HepG2 (cell line): ENCODE measurements at regions of chr9 and their contacts with region 1.

Region 1: GRCh38 chr9:133149126-133150107 is 14.3 kb downstream of the GBGT1 start:
- DNase-seq: peak; percentile 82
- ATAC-seq: peak; percentile 61
- H3K4me3 ChIP-seq: peak overlapping the region; percentile 21 to 88 (median 88); a peak in 5 of 6 replicates
- H3K27ac ChIP-seq: peak overlapping the region; percentile 55
- H3K4me1 ChIP-seq: peaks cover 62% of the 10 kb centered on the region
- H3K27me3 ChIP-seq: peaks cover 0 to 4% of the 10 kb centered on the region in 2 experiments; a peak in 1 of 5 replicates
- CTCF ChIP-seq: peak; percentile 69
- EP300 ChIP-seq: no peak
- POLR2A ChIP-seq: peak in 1 of 2 experiments; percentile 45; a peak in 2 of 4 replicates
- RAD21 ChIP-seq: peak; percentile 55; the same call in 1 of the 2 replicates

Region 2: GRCh38 chr9:133030317-133031129 is 118.9 kb before region 1 on chr9 and contains the start of gene GTF3C5:
- CTCF ChIA-PET with region 1: no interaction called
- POLR2A ChIA-PET with region 1: interaction called, 10 read pairs
- in situ Hi-C with region 1: no loop called
- intact Hi-C with region 1: loop called (anchors 5 kb)
- DNase-seq: peak; percentile 99
- ATAC-seq: peak; percentile 98
- H3K4me3 ChIP-seq: peak within 1 kb of the TSS; percentile 95 to 99 (median 99)
- H3K27ac ChIP-seq: peak within 1 kb of the TSS; percentile 85
- H3K4me1 ChIP-seq: peaks cover 42% of the 10 kb centered on the region
- H3K27me3 ChIP-seq: no peaks in the 10 kb centered on the region; a peak in 1 of 5 replicates
- CTCF ChIP-seq: no peak
- EP300 ChIP-seq: 0 out of 4 replicates have a peak, but pooled peaks of 1 of the 2 experiments have one; percentile 22
- POLR2A ChIP-seq: peak; percentile 68 to 87
- RAD21 ChIP-seq: peak; percentile 54
- total RNA-seq, gene GTF3C5: 43.4 and 66.9 TPM in 2 replicates

Region 3: GRCh38 chr9:133048569-133048968 is 100.8 kb before region 1 on chr9:
- CTCF ChIA-PET with region 1: no interaction called
- POLR2A ChIA-PET with region 1: no interaction called
- in situ Hi-C with region 1: loop called (anchors 10 kb)
- intact Hi-C with region 1: loop called (anchors 5 kb)
- DNase-seq: no peak
- ATAC-seq: peak; percentile 67
- H3K4me3 ChIP-seq: no peak overlapping the region
- H3K27ac ChIP-seq: no peak overlapping the region
- H3K4me1 ChIP-seq: no peaks in the 10 kb centered on the region
- H3K27me3 ChIP-seq: no peaks in the 10 kb centered on the region
- CTCF ChIP-seq: peak; percentile 62
- EP300 ChIP-seq: no peak
- POLR2A ChIP-seq: no peak
- RAD21 ChIP-seq: no peak

Region 4: GRCh38 chr9:133103183-133103986 is 46.0 kb before region 1 on chr9:
- CTCF ChIA-PET with region 1: interaction called, 70 read pairs
- POLR2A ChIA-PET with region 1: interaction called, 3 read pairs
- in situ Hi-C with region 1: loop called (anchors 5 kb)
- intact Hi-C with region 1: loop called (anchors 1 kb)
- DNase-seq: peak; percentile 34
- ATAC-seq: peak; percentile 75
- H3K4me3 ChIP-seq: no peak overlapping the region
- H3K27ac ChIP-seq: no peak overlapping the region
- H3K4me1 ChIP-seq: no peaks in the 10 kb centered on the region
- H3K27me3 ChIP-seq: no peaks in the 10 kb centered on the region
- CTCF ChIP-seq: peak; percentile 98
- EP300 ChIP-seq: no peak
- POLR2A ChIP-seq: no peak
- RAD21 ChIP-seq: peak; percentile 93

Region 5: DNA sequence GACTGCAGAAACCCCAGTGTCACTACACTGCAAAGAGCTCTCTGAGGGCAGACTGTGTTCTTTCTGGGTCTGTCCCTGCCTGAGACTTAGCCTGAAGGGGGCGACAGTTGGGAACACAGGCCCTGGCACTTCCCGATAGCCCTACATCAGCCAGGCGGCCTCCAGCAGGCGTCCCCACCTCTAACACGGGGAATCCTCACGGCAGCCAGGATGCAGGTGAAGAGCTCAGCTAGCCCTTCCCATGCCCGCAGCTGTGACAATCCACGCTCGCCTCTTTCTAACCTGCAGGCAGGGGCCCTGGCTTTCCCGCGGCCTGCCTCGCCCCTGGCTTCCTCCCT is 192.6 kb after region 1 on chr9:
- CTCF ChIA-PET with region 1: no interaction called
- POLR2A ChIA-PET with region 1: no interaction called
- in situ Hi-C with region 1: no loop called
- intact Hi-C with region 1: no loop called
- DNase-seq: no peak
- ATAC-seq: peak; percentile 63
- H3K4me3 ChIP-seq: no peak overlapping the region
- H3K27ac ChIP-seq: no peak overlapping the region
- H3K4me1 ChIP-seq: peaks cover 11% of the 10 kb centered on the region
- H3K27me3 ChIP-seq: no peaks in the 10 kb centered on the region
- CTCF ChIP-seq: peak; percentile 42
- EP300 ChIP-seq: no peak
- POLR2A ChIP-seq: no peak
- RAD21 ChIP-seq: no peak